SK-N-SH (cell line): ENCODE measurements at regions of chr6 and their contacts with region 1.

Region 1: GRCh38 chr6:152948150-152948768 is 34.6 kb downstream of the FBXO5 start:
- DNase-seq: peak; percentile 49
- H3K4me3 ChIP-seq: peak overlapping the region; percentile 24 to 28; a peak in 2 of 4 replicates
- H3K27ac ChIP-seq: no peak overlapping the region
- H3K4me1 ChIP-seq: peaks cover 2 to 13% of the 10 kb centered on the region in 2 experiments; a peak in 3 of 4 replicates
- H3K27me3 ChIP-seq: no peaks in the 10 kb centered on the region
- CTCF ChIP-seq: peak; percentile 71
- EP300 ChIP-seq: no peak
- RAD21 ChIP-seq: peak; percentile 96

Region 2: GRCh38 chr6:152552616-152553209 is 395.5 kb before region 1 on chr6:
- CTCF ChIA-PET with region 1: interaction called, 10 read pairs
- POLR2A ChIA-PET with region 1: no interaction called
- DNase-seq: peak; percentile 55
- H3K4me3 ChIP-seq: peak overlapping the region in 1 of 2 experiments; percentile 49; a peak in 1 of 4 replicates
- H3K27ac ChIP-seq: no peak overlapping the region
- H3K4me1 ChIP-seq: peaks cover 0 to 5% of the 10 kb centered on the region in 2 experiments; a peak in 2 of 4 replicates
- H3K27me3 ChIP-seq: no peaks in the 10 kb centered on the region
- CTCF ChIP-seq: peak; percentile 70
- EP300 ChIP-seq: peak in 1 of 2 experiments; percentile 38; a peak in 1 of 4 replicates
- RAD21 ChIP-seq: peak; percentile 88

Region 3: DNA sequence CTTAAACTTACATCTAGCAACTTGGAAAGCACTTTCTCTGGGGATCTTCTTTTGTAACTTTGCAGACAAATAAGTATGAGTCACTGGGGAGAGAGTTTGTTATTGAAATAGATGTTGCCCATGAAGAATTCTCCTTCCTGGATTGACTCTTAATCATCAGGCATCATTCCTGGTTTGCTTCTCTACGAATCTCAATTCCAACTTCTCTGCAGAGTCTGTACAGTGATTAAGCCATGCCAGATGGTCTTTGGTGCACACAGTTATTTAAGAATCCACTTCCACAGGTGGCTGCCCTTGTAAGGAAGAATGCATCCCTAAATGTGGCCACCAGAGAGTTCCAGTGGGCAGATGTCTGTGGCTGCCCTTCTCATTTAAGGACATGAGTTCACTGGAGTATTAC is 224.9 kb before region 1 on chr6:
- CTCF ChIA-PET with region 1: interaction called, 14 read pairs
- POLR2A ChIA-PET with region 1: no interaction called
- DNase-seq: no peak
- H3K4me3 ChIP-seq: no peak overlapping the region
- H3K27ac ChIP-seq: peak overlapping the region; percentile 70 to 92
- H3K4me1 ChIP-seq: peaks cover 2 to 9% of the 10 kb centered on the region in 2 experiments; a peak in 3 of 4 replicates
- H3K27me3 ChIP-seq: no peaks in the 10 kb centered on the region
- CTCF ChIP-seq: no peak
- EP300 ChIP-seq: peak in 1 of 2 experiments; percentile 43; a peak in 1 of 4 replicates
- RAD21 ChIP-seq: no peak

Region 4: GRCh38 chr6:152815230-152815872 is 132.9 kb before region 1 on chr6:
- CTCF ChIA-PET with region 1: interaction called, 19 read pairs
- POLR2A ChIA-PET with region 1: no interaction called
- DNase-seq: peak; percentile 52
- H3K4me3 ChIP-seq: no peak overlapping the region
- H3K27ac ChIP-seq: peak overlapping the region in 1 of 2 experiments; percentile 98; a peak in 2 of 4 replicates
- H3K4me1 ChIP-seq: peaks cover 0 to 15% of the 10 kb centered on the region in 2 experiments; a peak in 2 of 4 replicates
- H3K27me3 ChIP-seq: no peaks in the 10 kb centered on the region
- CTCF ChIP-seq: no peak
- EP300 ChIP-seq: peak in 1 of 2 experiments; percentile 95; a peak in 2 of 4 replicates
- RAD21 ChIP-seq: peak; percentile 27; the same call in 1 of the 2 replicates

Region 5: GRCh38 chr6:152922706-152923105 is 25.6 kb before region 1 on chr6:
- CTCF ChIA-PET with region 1: no interaction called
- POLR2A ChIA-PET with region 1: no interaction called
- DNase-seq: no peak
- H3K4me3 ChIP-seq: no peak overlapping the region
- H3K27ac ChIP-seq: no peak overlapping the region
- H3K4me1 ChIP-seq: no peaks in the 10 kb centered on the region
- H3K27me3 ChIP-seq: no peaks in the 10 kb centered on the region
- CTCF ChIP-seq: no peak
- EP300 ChIP-seq: no peak
- RAD21 ChIP-seq: no peak

Region 6: DNA sequence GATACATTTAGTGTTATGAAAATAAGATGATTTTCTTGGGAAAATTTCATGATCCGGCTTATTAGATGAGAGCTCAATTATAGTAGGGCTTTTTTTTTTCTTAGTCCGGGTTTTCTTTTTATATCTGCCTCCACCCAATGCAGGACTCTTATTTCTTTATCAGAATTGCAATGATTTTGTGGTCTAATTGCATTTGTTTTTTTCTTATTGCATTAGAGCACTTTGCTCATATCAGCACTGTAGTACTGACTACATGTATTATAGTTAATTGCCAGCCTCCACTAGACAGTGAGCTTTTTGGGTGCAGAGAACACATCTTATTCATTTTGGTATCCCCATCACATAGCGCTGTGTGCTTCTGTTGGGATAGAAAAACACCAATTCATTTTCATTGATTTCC is 15.4 kb before region 1 on chr6:
- CTCF ChIA-PET with region 1: interaction called, 19 read pairs
- POLR2A ChIA-PET with region 1: no interaction called
- DNase-seq: peak; percentile 24
- H3K4me3 ChIP-seq: no peak overlapping the region
- H3K27ac ChIP-seq: no peak overlapping the region
- H3K4me1 ChIP-seq: no peaks in the 10 kb centered on the region; a peak in 2 of 4 replicates
- H3K27me3 ChIP-seq: no peaks in the 10 kb centered on the region
- CTCF ChIP-seq: no peak
- EP300 ChIP-seq: 0 out of 4 replicates have a peak, but pooled peaks of 1 of the 2 experiments have one; percentile 29
- RAD21 ChIP-seq: no peak